AG04449 (cell line): ENCODE measurements at regions of chr6 and their contacts with region 1.

Region 1: GRCh38 chr6:108541838-108542759 is 18.6 kb upstream of the FOXO3 start:
- DNase-seq: no peak
- H3K4me3 ChIP-seq: no peak overlapping the region
- CTCF ChIP-seq: peak; percentile 77

Region 2: GRCh38 chr6:108518714-108519576 is 23.2 kb before region 1 on chr6:
- CTCF ChIA-PET with region 1: no interaction called
- POLR2A ChIA-PET with region 1: no interaction called
- DNase-seq: no peak
- H3K4me3 ChIP-seq: no peak overlapping the region
- CTCF ChIP-seq: peak; percentile 46

Region 3: DNA sequence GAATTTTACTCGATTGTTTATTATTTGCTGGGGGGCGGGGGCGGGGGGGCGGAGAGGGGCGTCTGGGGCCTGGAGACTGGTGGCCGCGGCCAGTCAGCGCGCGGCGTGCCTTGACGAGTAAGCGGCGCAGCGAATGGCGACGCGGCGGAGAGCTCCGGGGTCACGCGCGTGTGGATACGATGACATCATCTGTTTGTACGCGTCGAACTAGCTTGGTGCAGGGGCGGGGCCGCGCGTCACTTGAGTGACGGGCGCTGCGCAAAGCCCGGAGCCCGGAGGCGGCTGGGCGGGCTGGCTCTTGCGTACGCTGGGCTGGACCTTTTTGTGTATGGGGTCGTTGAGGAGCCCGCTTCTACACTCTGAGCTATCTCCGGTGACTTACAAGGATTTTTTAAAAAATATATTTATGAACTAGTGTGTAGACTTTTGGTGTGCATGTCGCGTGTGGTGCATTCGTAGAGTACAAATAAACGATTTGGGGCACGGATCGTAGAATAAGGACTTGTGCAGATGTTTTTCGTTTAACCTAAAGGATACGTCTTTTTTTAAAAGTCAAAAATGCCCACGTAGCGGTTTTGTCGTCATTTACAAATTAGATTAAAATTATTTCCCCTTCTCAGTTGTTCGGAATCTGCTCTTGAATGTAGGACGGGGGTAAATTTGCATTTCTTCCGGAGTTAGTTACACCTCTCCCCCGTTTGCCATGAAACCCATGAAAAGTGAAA is 16.4 kb after region 1 on chr6:
- CTCF ChIA-PET with region 1: interaction called, 41 read pairs
- POLR2A ChIA-PET with region 1: no interaction called
- DNase-seq: peak; percentile 94
- H3K4me3 ChIP-seq: peak overlapping the region; percentile 65
- CTCF ChIP-seq: no peak

Region 4: GRCh38 chr6:108798670-108799353 is 256.7 kb after region 1 on chr6:
- CTCF ChIA-PET with region 1: interaction called, 17 read pairs
- POLR2A ChIA-PET with region 1: no interaction called
- DNase-seq: no peak
- H3K4me3 ChIP-seq: no peak overlapping the region
- CTCF ChIP-seq: no peak

Region 5: GRCh38 chr6:108848116-108848868 is 306.2 kb after region 1 on chr6 and contains the start of gene ARMC2:
- CTCF ChIA-PET with region 1: interaction called, 15 read pairs
- POLR2A ChIA-PET with region 1: no interaction called
- DNase-seq: peak; percentile 9
- H3K4me3 ChIP-seq: peak within 1 kb of the TSS; percentile 87
- CTCF ChIP-seq: no peak

Region 6: DNA sequence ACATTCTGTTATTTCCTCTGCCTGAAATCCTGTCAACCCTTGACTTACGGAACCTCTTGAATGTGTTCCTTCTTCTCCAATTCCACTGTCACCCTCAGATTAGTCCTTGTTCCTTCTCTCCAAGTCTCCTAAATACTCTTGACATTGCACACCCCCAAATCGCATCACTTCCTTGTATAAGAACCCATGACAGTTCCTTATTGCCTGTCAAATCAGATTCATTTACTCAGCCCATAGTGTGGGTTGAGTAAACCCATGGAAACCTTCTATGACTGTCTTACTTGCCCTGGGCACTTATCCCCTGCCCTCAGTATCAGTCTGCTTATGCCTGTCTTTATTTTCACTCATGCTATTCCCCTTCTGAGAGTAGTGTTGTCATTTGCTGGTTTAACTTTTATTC is 346.6 kb after region 1 on chr6:
- CTCF ChIA-PET with region 1: interaction called, 168 read pairs
- POLR2A ChIA-PET with region 1: interaction called, 3 read pairs
- DNase-seq: no peak
- H3K4me3 ChIP-seq: no peak overlapping the region
- CTCF ChIP-seq: no peak

Region 7: GRCh38 chr6:109073344-109074132 is 531.4 kb after region 1 on chr6:
- CTCF ChIA-PET with region 1: interaction called, 197 read pairs
- POLR2A ChIA-PET with region 1: no interaction called
- DNase-seq: no peak
- H3K4me3 ChIP-seq: no peak overlapping the region
- CTCF ChIP-seq: peak; percentile 27